CD8-positive, alpha-beta memory T cell (primary cell): ENCODE measurements at regions of chr11 and their contacts with region 1.

Region 1: GRCh38 chr11:65615229-65615941 is at the start of gene PCNX3:
- DNase-seq: peak; percentile 100
- H3K4me3 ChIP-seq: peak within 1 kb of the TSS; percentile 93
- H3K4me3 Mint-ChIP-seq: peak within 1 kb of the TSS; percentile 89 to 99 (median 97)
- H3K27ac ChIP-seq: peak within 1 kb of the TSS; percentile 91
- H3K27ac Mint-ChIP-seq: peak within 1 kb of the TSS; percentile 88 to 100 (median 99)
- H3K4me1 ChIP-seq: peaks cover 44% of the 10 kb centered on the region
- H3K4me1 Mint-ChIP-seq: peaks cover 31 to 66% (median 37%) of the 10 kb centered on the region in 3 donors
- H3K27me3 ChIP-seq: no peaks in the 10 kb centered on the region
- H3K27me3 Mint-ChIP-seq: no peaks in the 10 kb centered on the region
- total RNA-seq, gene PCNX3: 46.4 to 53.1 TPM

Region 2: GRCh38 chr11:65540297-65541092 is 74.9 kb before region 1 on chr11:
- CTCF ChIA-PET with region 1: interaction called, 28 read pairs
- POLR2A ChIA-PET with region 1: interaction called, 12 read pairs
- DNase-seq: peak; percentile 82 to 92 (median 89)
- H3K4me3 ChIP-seq: peak overlapping the region; percentile 74
- H3K4me3 Mint-ChIP-seq: peak overlapping the region; percentile 82 to 94 (median 87)
- H3K27ac ChIP-seq: peak overlapping the region; percentile 44
- H3K27ac Mint-ChIP-seq: peak overlapping the region; percentile 78 to 93 (median 84)
- H3K4me1 ChIP-seq: peaks cover 11% of the 10 kb centered on the region
- H3K4me1 Mint-ChIP-seq: peaks cover 13 to 20% (median 14%) of the 10 kb centered on the region in 3 donors
- H3K27me3 ChIP-seq: no peaks in the 10 kb centered on the region
- H3K27me3 Mint-ChIP-seq: no peaks in the 10 kb centered on the region

Region 3: GRCh38 chr11:65593518-65594298 is 21.7 kb before region 1 on chr11:
- CTCF ChIA-PET with region 1: interaction called, 11 read pairs
- POLR2A ChIA-PET with region 1: interaction called, 8 read pairs
- DNase-seq: peak in 2 of 5 donors; percentile 45 to 66
- H3K4me3 ChIP-seq: no peak overlapping the region
- H3K4me3 Mint-ChIP-seq: no peak overlapping the region
- H3K27ac ChIP-seq: no peak overlapping the region
- H3K27ac Mint-ChIP-seq: peak overlapping the region in 2 of 8 donors; percentile 48 to 84
- H3K4me1 ChIP-seq: peaks cover 17% of the 10 kb centered on the region
- H3K4me1 Mint-ChIP-seq: peaks cover 9 to 19% (median 11%) of the 10 kb centered on the region in 3 donors
- H3K27me3 ChIP-seq: no peaks in the 10 kb centered on the region
- H3K27me3 Mint-ChIP-seq: no peaks in the 10 kb centered on the region

Region 4: DNA sequence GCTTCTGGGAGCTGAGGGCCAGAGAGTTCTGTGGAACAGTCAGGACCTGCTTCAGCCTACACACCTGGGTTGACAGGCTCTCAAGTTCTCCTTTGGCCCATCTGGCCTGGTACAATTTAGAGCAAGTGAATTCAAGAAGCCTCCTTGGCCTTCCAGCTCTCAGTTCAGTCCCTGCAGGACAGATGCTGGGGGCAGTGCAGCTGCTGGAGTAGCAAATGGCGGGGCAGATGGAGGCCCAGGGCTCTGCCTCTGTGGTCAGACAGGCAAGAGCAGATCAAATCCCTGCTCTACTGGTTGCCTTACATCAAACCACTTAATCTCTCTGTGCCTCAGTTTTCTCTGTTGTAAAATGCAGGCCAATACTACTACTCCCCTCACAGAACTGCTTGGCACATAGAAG is 11.1 kb before region 1 on chr11:
- CTCF ChIA-PET with region 1: no interaction called
- POLR2A ChIA-PET with region 1: no interaction called
- DNase-seq: no peak
- H3K4me3 ChIP-seq: no peak overlapping the region
- H3K4me3 Mint-ChIP-seq: no peak overlapping the region
- H3K27ac ChIP-seq: no peak overlapping the region
- H3K27ac Mint-ChIP-seq: peak overlapping the region in 1 of 8 donors; percentile 32
- H3K4me1 ChIP-seq: no peaks in the 10 kb centered on the region
- H3K4me1 Mint-ChIP-seq: peaks cover 4 to 6% (median 6%) of the 10 kb centered on the region in 3 donors
- H3K27me3 ChIP-seq: no peaks in the 10 kb centered on the region
- H3K27me3 Mint-ChIP-seq: no peaks in the 10 kb centered on the region

Region 5: GRCh38 chr11:65652511-65653231 is 37.3 kb after region 1 on chr11:
- CTCF ChIA-PET with region 1: interaction called, 6 read pairs
- POLR2A ChIA-PET with region 1: interaction called, 32 read pairs
- DNase-seq: peak; percentile 95 to 97 (median 97)
- H3K4me3 ChIP-seq: peak overlapping the region; percentile 73
- H3K4me3 Mint-ChIP-seq: peak overlapping the region; percentile 82 to 93 (median 86)
- H3K27ac ChIP-seq: peak overlapping the region; percentile 97
- H3K27ac Mint-ChIP-seq: peak overlapping the region; percentile 89 to 100 (median 97)
- H3K4me1 ChIP-seq: peaks cover 31% of the 10 kb centered on the region
- H3K4me1 Mint-ChIP-seq: peaks cover 54 to 64% (median 54%) of the 10 kb centered on the region in 3 donors
- H3K27me3 ChIP-seq: no peaks in the 10 kb centered on the region
- H3K27me3 Mint-ChIP-seq: peaks cover 0 to 8% of the 10 kb centered on the region in 2 donors

Region 6: GRCh38 chr11:65711785-65712632 is 96.6 kb after region 1 on chr11 and contains the start of gene KAT5:
- CTCF ChIA-PET with region 1: interaction called, 16 read pairs
- POLR2A ChIA-PET with region 1: interaction called, 4 read pairs
- DNase-seq: peak; percentile 97 to 99 (median 98)
- H3K4me3 ChIP-seq: peak within 1 kb of the TSS; percentile 74
- H3K4me3 Mint-ChIP-seq: peak within 1 kb of the TSS; percentile 94 to 99 (median 96)
- H3K27ac ChIP-seq: peak within 1 kb of the TSS; percentile 94
- H3K27ac Mint-ChIP-seq: peak within 1 kb of the TSS; percentile 98 to 100 (median 99)
- H3K4me1 ChIP-seq: peaks cover 19% of the 10 kb centered on the region
- H3K4me1 Mint-ChIP-seq: peaks cover 20 to 32% (median 20%) of the 10 kb centered on the region in 3 donors
- H3K27me3 ChIP-seq: no peaks in the 10 kb centered on the region
- H3K27me3 Mint-ChIP-seq: no peaks in the 10 kb centered on the region
- total RNA-seq, gene KAT5: 79.9 to 87.1 TPM